CD4-positive, alpha-beta memory T cell (primary cell): ENCODE measurements at regions of chr9 and their contacts with region 1.

Region 1: GRCh38 chr9:134175808-134176598 is 11.6 kb upstream of the RNU6ATAC start:
- DNase-seq: no peak
- H3K4me3 ChIP-seq: no peak overlapping the region
- H3K4me3 Mint-ChIP-seq: no peak overlapping the region
- H3K27ac ChIP-seq: no peak overlapping the region
- H3K27ac Mint-ChIP-seq: no peak overlapping the region
- H3K4me1 ChIP-seq: no peaks in the 10 kb centered on the region
- H3K4me1 Mint-ChIP-seq: peaks cover 2 to 17% (median 4%) of the 10 kb centered on the region in 4 donors
- H3K27me3 ChIP-seq: no peaks in the 10 kb centered on the region
- H3K27me3 Mint-ChIP-seq: no peaks in the 10 kb centered on the region

Region 2: GRCh38 chr9:134195558-134195957 is 19.6 kb after region 1 on chr9:
- CTCF ChIA-PET with region 1: interaction called, 17 read pairs
- POLR2A ChIA-PET with region 1: no interaction called
- intact Hi-C with region 1: no loop called
- DNase-seq: peak in 4 of 5 donors; percentile 9 to 20 (median 16)
- H3K4me3 ChIP-seq: no peak overlapping the region
- H3K4me3 Mint-ChIP-seq: peak overlapping the region in 7 of 8 donors; percentile 13 to 90 (median 73)
- H3K27ac ChIP-seq: no peak overlapping the region
- H3K27ac Mint-ChIP-seq: peak overlapping the region; percentile 0 to 69 (median 2)
- H3K4me1 ChIP-seq: peaks cover 31% of the 10 kb centered on the region
- H3K4me1 Mint-ChIP-seq: peaks cover 20 to 36% (median 26%) of the 10 kb centered on the region in 4 donors
- H3K27me3 ChIP-seq: no peaks in the 10 kb centered on the region
- H3K27me3 Mint-ChIP-seq: no peaks in the 10 kb centered on the region

Region 3: GRCh38 chr9:134217832-134218629 is 42.0 kb after region 1 on chr9:
- CTCF ChIA-PET with region 1: interaction called, 21 read pairs
- POLR2A ChIA-PET with region 1: interaction called, 5 read pairs
- intact Hi-C with region 1: no loop called
- DNase-seq: no peak
- H3K4me3 ChIP-seq: no peak overlapping the region
- H3K4me3 Mint-ChIP-seq: no peak overlapping the region
- H3K27ac ChIP-seq: no peak overlapping the region
- H3K27ac Mint-ChIP-seq: peak overlapping the region in 1 of 7 donors; percentile 47
- H3K4me1 ChIP-seq: no peaks in the 10 kb centered on the region
- H3K4me1 Mint-ChIP-seq: no peaks in the 10 kb centered on the region
- H3K27me3 ChIP-seq: no peaks in the 10 kb centered on the region
- H3K27me3 Mint-ChIP-seq: no peaks in the 10 kb centered on the region

Region 4: GRCh38 chr9:134325817-134326723 is 150.1 kb after region 1 on chr9 and contains the start of gene RXRA:
- CTCF ChIA-PET with region 1: interaction called, 6 read pairs
- POLR2A ChIA-PET with region 1: no interaction called
- intact Hi-C with region 1: loop called (anchors 2 kb)
- DNase-seq: peak; percentile 63 to 80 (median 68)
- H3K4me3 ChIP-seq: peak within 1 kb of the TSS; percentile 57 to 80
- H3K4me3 Mint-ChIP-seq: peak within 1 kb of the TSS; percentile 73 to 82 (median 80)
- H3K27ac ChIP-seq: peak within 1 kb of the TSS; percentile 45
- H3K27ac Mint-ChIP-seq: peak within 1 kb of the TSS in 4 of 7 donors; percentile 48 to 97 (median 72)
- H3K4me1 ChIP-seq: peaks cover 22% of the 10 kb centered on the region
- H3K4me1 Mint-ChIP-seq: peaks cover 4 to 32% (median 12%) of the 10 kb centered on the region in 4 donors
- H3K27me3 ChIP-seq: no peaks in the 10 kb centered on the region
- H3K27me3 Mint-ChIP-seq: no peaks in the 10 kb centered on the region
- total RNA-seq, gene RXRA: 11.6 to 11.9 TPM

Region 5: DNA sequence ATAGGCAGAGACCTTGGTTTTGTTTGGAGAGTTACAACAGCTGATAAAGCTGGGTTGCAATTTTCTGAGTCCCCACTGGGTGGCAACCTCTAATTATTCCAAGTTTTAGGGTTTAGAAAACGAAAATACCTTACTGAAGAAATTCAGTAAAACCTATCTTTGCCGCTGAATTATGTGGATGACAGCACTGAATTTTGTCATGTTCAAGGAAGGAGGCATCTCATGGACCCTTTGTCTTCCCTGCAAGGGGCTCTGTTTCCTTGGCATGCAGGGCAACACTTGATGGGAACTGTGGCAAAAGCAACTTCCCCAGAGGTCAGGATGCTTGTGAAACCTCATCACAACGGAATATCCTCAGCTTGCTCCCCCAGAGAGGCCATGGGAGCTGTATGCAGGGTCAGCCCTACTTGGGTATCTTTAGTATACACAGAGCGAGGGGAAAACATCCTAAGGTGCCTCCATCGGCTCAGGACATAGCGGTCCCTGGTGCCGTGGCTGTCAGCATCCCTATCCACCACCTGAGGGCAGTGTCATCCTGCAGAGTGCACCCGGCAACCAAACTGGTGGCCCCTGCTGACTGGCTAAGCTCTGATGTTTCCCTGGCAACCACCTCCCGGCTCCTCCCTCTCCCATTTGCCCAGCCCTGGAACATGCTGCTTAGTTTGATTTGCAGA is 273.4 kb after region 1 on chr9:
- CTCF ChIA-PET with region 1: interaction called, 19 read pairs
- POLR2A ChIA-PET with region 1: no interaction called
- intact Hi-C with region 1: no loop called
- DNase-seq: peak; percentile 81 to 91 (median 86)
- H3K4me3 ChIP-seq: no peak overlapping the region
- H3K4me3 Mint-ChIP-seq: peak overlapping the region in 1 of 8 donors; percentile 65
- H3K27ac ChIP-seq: no peak overlapping the region
- H3K27ac Mint-ChIP-seq: peak overlapping the region in 6 of 7 donors; percentile 31 to 79 (median 64)
- H3K4me1 ChIP-seq: no peaks in the 10 kb centered on the region
- H3K4me1 Mint-ChIP-seq: peaks cover 2 to 12% (median 5%) of the 10 kb centered on the region in 4 donors
- H3K27me3 ChIP-seq: no peaks in the 10 kb centered on the region
- H3K27me3 Mint-ChIP-seq: no peaks in the 10 kb centered on the region

Region 6: GRCh38 chr9:134455934-134456739 is 280.1 kb after region 1 on chr9:
- CTCF ChIA-PET with region 1: interaction called, 21 read pairs
- POLR2A ChIA-PET with region 1: interaction called, 5 read pairs
- intact Hi-C with region 1: no loop called
- DNase-seq: peak; percentile 76 to 83 (median 81)
- H3K4me3 ChIP-seq: peak overlapping the region; percentile 62 to 76
- H3K4me3 Mint-ChIP-seq: peak overlapping the region; percentile 73 to 94 (median 84)
- H3K27ac ChIP-seq: peak overlapping the region; percentile 64
- H3K27ac Mint-ChIP-seq: peak overlapping the region; percentile 86 to 96 (median 93)
- H3K4me1 ChIP-seq: peaks cover 22% of the 10 kb centered on the region
- H3K4me1 Mint-ChIP-seq: peaks cover 4 to 18% (median 9%) of the 10 kb centered on the region in 4 donors
- H3K27me3 ChIP-seq: no peaks in the 10 kb centered on the region
- H3K27me3 Mint-ChIP-seq: no peaks in the 10 kb centered on the region